Activated CD8-positive, alpha-beta T cell treated with anti-CD3 and anti-CD28 coated beads for 36 hours (primary cell): ENCODE measurements at regions of chr19 and their contacts with region 1.

Region 1: GRCh38 chr19:18152444-18152816 is 533 bp upstream of the PIK3R2 start:
- DNase-seq: peak; percentile 100
- ATAC-seq: peak; percentile 76
- H3K4me3 Mint-ChIP-seq: peak overlapping the region; percentile 83
- H3K27ac Mint-ChIP-seq: peak overlapping the region; percentile 96
- H3K4me1 Mint-ChIP-seq: peaks cover 20% of the 10 kb centered on the region
- H3K27me3 Mint-ChIP-seq: no peaks in the 10 kb centered on the region
- CTCF ChIP-seq: peak; percentile 79

Region 2: GRCh38 chr19:18007044-18007916 is 145.2 kb before region 1 on chr19:
- CTCF ChIA-PET with region 1: interaction called, 5 read pairs
- POLR2A ChIA-PET with region 1: no interaction called
- intact Hi-C with region 1: loop called (anchors 10 kb)
- DNase-seq: peak; percentile 85
- ATAC-seq: peak; percentile 65
- H3K4me3 Mint-ChIP-seq: peak overlapping the region; percentile 77
- H3K27ac Mint-ChIP-seq: peak overlapping the region; percentile 82
- H3K4me1 Mint-ChIP-seq: peaks cover 29% of the 10 kb centered on the region
- H3K27me3 Mint-ChIP-seq: no peaks in the 10 kb centered on the region
- CTCF ChIP-seq: peak; percentile 100

Region 3: DNA sequence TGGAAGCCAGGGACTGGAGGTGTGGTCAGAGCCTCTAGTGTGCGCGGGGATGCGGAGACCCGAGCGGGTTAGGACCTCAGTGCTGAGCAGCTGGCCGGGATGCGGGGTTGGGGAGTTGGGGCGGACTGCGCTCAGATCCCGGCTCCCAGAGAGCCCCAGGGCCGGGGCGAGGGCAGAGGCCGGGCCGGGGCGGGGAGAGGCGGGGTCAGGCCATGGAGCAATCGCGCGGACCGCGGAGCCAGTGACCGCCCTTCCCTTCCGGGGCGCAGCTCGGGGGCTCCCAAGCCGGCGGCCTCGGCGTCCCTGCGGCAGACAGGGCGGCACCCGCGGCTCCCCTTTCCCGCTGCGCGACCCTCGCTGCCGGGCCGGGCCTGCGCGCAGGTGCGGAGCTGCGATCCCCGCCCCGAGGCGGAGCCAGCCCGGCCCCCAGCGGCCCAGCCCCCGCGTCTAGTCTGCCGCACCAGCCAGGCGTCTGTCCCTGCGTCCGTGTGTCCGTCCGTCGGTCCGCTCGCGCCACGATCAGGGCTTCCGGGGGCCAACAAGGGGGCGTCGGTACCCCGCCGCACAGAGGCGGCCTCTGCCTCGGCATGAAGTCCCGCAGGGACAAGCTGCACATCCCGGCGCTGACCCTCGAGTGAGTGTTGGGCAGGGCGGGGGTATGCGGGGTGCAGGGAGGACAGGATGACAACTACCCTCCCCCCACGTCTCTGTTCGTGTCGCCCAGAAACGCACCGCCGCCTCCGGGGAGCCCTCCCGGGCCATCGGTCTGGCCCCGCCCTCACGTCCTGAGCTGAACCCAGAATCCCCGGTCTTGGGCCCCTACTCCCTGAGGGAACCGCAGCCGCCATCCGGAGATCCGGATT is 42.5 kb before region 1 on chr19:
- CTCF ChIA-PET with region 1: interaction called, 20 read pairs
- POLR2A ChIA-PET with region 1: interaction called, 6 read pairs
- intact Hi-C with region 1: no loop called
- DNase-seq: peak; percentile 57
- ATAC-seq: peak; percentile 78
- H3K4me3 Mint-ChIP-seq: peak overlapping the region; percentile 72
- H3K27ac Mint-ChIP-seq: no peak overlapping the region
- H3K4me1 Mint-ChIP-seq: peaks cover 20% of the 10 kb centered on the region
- H3K27me3 Mint-ChIP-seq: no peaks in the 10 kb centered on the region
- CTCF ChIP-seq: no peak

Region 4: GRCh38 chr19:18117692-18118378 is 34.6 kb before region 1 on chr19:
- CTCF ChIA-PET with region 1: interaction called, 15 read pairs
- POLR2A ChIA-PET with region 1: interaction called, 18 read pairs
- intact Hi-C with region 1: no loop called
- DNase-seq: peak; percentile 94
- ATAC-seq: peak; percentile 90
- H3K4me3 Mint-ChIP-seq: peak overlapping the region; percentile 77
- H3K27ac Mint-ChIP-seq: peak overlapping the region; percentile 86
- H3K4me1 Mint-ChIP-seq: peaks cover 32% of the 10 kb centered on the region
- H3K27me3 Mint-ChIP-seq: no peaks in the 10 kb centered on the region
- CTCF ChIP-seq: no peak

Region 5: DNA sequence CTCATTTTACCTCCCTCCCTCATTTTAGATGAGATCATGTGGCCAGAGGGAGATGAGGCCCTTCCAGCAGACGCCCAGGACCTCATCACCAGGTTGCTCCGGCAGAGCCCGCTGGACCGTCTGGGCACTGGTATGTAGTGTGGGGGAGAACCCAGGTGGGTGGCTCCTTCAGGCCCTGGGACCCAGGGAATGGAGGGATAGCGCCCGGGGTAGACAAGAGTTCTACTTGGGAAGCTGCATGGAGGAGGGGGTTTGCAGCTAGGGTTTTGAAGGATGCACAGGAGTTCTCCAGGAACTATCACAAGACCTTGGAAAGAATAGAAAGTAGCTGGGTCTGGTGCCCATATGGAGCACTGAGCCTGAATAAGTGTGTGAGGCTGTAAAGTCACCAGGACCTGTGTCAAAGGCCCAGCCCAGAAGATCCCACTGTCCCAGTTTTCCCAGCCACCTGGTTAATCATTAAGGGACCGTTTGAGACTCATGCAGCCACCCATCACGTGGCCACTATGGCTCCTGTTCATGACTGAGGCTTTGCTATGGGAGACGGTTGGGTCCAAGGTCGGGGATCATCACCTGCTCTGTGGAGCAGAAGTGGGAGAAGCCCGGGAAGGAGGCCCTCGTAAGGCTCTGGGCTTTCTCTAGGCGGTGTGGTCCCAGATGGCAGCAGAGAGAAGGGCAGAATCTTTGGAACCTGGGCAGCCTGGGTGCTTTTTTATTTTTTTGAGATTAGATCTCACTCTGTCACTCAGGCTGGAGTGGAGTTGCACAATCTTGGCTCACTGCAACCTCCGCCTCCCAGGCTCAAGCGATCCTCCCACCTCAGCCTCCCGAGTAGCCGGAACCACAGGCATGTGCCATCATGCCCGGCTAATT is 16.5 kb before region 1 on chr19:
- CTCF ChIA-PET with region 1: interaction called, 4 read pairs
- POLR2A ChIA-PET with region 1: interaction called, 15 read pairs
- intact Hi-C with region 1: no loop called
- DNase-seq: no peak
- ATAC-seq: no peak
- H3K4me3 Mint-ChIP-seq: no peak overlapping the region
- H3K27ac Mint-ChIP-seq: no peak overlapping the region
- H3K4me1 Mint-ChIP-seq: no peaks in the 10 kb centered on the region
- H3K27me3 Mint-ChIP-seq: no peaks in the 10 kb centered on the region
- CTCF ChIP-seq: no peak

Region 6: GRCh38 chr19:18141031-18141430 is 11.4 kb before region 1 on chr19:
- CTCF ChIA-PET with region 1: interaction called, 4 read pairs
- POLR2A ChIA-PET with region 1: interaction called, 15 read pairs
- intact Hi-C with region 1: no loop called
- DNase-seq: no peak
- ATAC-seq: no peak
- H3K4me3 Mint-ChIP-seq: no peak overlapping the region
- H3K27ac Mint-ChIP-seq: no peak overlapping the region
- H3K4me1 Mint-ChIP-seq: no peaks in the 10 kb centered on the region
- H3K27me3 Mint-ChIP-seq: no peaks in the 10 kb centered on the region
- CTCF ChIP-seq: no peak